ENCODE measurements at regions of chr11 and their contacts with region 1.

Region 1: DNA sequence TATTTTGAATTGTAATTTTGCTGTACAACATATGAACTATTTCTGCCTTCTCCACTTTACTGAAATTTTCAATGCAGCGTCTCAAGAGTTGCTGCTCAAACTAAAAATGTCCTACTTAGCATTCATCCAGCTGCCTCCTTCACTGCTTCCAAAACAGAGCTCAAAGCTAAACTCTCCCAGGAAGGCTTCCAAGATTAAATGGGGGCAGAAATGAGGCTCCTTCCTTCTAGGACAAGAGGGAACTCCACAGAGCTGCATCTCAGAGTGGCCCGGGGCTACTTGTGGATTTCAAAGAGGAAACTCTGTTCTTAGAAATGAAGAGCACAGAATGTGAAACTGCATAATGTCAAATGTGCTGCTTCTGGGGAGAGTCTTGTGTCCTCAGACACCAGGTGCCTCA is 295.9 kb upstream of the NCAM1 start:
- DNase-seq: no peak

Region 2: DNA sequence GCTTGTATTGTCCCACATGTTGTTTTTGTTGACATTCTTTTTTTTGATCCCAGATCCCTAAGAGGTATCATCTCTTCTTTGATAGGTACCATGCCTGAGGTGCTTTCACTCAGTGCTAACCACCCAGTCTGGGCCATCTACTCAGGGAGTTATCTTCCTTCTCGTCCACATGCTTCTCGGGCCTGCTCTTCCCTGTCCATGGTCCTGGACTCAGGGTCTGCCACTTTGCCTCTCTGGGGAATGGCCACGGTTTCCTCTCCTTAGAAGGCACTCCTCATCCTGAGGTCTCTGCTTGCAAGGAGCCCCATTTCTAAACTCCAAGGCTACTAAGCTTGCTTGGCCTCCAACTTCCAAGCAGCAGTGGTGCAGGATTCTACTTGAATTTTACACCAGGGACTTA is 68.9 kb after region 1 on chr11:
- intact Hi-C with region 1: loop called in 1 of 2 experiments (anchors 10 kb)
- DNase-seq: no peak